ENCODE measurements at regions of chr22 and their contacts with region 1.

Region 1: DNA sequence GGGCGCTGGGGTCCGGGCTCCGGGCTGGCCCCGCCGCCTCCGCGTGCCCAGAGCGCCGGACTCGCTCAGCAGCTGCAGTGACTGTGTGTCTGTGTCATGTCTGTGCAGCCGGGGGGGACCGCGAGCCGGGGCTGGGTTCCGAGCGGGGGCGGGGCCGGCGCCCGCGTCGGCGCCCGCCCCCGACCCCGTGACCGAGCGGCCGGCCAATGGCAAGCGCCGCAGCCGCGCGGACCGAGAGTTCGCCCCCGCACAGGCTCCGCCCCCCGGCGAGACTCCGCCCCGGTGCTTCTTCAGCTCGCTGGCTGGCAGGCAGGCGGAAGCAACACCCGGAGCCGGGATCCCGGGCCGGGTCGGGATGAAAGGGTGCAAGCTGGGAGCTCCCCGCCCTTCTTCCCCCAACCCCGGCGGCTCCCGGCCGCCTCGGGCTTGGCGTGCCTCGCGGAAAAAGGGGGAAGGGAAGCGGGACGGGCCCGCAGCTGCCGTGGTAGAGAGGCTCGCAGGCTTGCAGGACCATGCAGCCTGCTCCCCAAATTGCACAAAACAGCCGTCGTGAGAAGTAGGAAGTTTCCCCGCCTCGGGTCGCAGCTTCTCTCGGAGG is 750 bp upstream of the LARGE1 start:
- DNase-seq: peak; percentile 79 to 99
- H3K4me3 ChIP-seq: peak overlapping the region; percentile 77 to 94
- H3K27ac ChIP-seq: peak overlapping the region; percentile 81 to 85
- H3K4me1 ChIP-seq: peaks cover 5 to 13% of the 10 kb centered on the region in 2 donors
- H3K27me3 ChIP-seq: no peaks in the 10 kb centered on the region
- CTCF ChIP-seq: no peak

Region 2: GRCh38 chr22:32474635-32475467 is 1446.2 kb before region 1 on chr22 and contains the start of gene FBXO7:
- intact Hi-C with region 1: loop called (anchors 10 kb)
- DNase-seq: peak; percentile 61 to 95
- H3K4me3 ChIP-seq: peak within 1 kb of the TSS; percentile 76 to 85
- H3K27ac ChIP-seq: peak within 1 kb of the TSS; percentile 98 to 99
- H3K4me1 ChIP-seq: peaks cover 4 to 18% of the 10 kb centered on the region in 2 donors
- H3K27me3 ChIP-seq: no peaks in the 10 kb centered on the region
- CTCF ChIP-seq: peak; percentile 26 to 52 (median 37)
- total RNA-seq, gene FBXO7: 47.0 TPM

Region 3: DNA sequence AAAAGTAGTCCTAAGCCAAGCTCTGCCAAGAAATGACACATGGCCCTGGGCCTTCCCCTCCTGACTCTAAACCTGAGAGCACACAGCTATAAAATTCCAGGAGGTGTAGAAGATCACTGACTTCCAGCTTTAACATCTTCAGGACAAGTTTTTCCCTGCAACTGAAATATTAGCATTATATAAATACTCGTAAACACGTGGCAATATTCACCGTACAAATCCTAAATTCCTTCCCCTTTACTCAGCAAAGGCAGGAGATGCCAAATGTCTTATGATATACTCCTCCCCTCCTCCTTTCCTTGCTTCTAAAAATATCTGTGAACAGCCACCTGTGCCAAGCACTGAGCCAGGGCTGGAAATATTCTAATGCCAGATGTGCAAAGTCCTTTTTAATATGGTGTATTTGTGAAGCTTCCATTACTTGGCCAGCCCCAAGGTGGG is 194.7 kb before region 1 on chr22:
- intact Hi-C with region 1: loop called (anchors 2 kb)
- DNase-seq: no peak
- H3K4me3 ChIP-seq: no peak overlapping the region
- H3K27ac ChIP-seq: peak overlapping the region; percentile 14 to 34
- H3K4me1 ChIP-seq: peaks cover 0 to 15% of the 10 kb centered on the region in 2 donors
- H3K27me3 ChIP-seq: no peaks in the 10 kb centered on the region
- CTCF ChIP-seq: no peak

Region 4: DNA sequence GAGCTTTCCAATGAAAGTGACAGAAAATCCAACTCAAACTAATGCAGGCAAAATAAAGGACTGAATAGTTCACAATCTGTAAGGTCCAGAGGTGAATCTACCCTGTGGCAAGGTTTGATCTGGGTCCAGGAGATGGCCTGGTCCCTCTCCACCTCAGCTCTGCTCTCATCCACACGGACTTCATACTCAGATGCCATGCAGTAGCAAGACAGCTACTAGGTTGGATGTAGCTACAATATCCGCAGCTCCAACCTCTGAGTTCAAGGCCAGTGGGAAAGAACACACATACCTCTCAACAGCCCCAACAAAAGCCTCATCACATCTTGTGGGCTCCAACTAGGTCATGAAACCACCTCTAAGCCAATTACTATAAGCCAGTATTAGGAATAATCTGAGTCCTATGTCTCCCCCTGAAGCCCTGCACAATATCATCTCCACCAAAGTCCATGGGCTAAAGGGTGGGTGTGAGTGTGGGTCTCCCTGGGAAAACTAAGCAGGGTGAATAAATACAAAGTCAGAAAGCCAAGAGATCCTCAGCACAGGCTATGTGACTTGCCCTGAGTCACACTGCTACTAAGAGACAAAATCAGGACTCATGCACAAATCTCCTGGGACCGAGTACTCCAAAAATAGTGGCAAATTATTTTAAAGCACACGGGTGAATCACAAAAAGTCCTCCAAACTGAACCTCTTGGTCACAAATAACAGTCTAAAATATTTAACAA is 79.6 kb before region 1 on chr22:
- intact Hi-C with region 1: loop called (anchors 1 kb)
- DNase-seq: no peak
- H3K4me3 ChIP-seq: peak overlapping the region in 1 of 2 donors; percentile 28
- H3K27ac ChIP-seq: peak overlapping the region; percentile 49 to 66
- H3K4me1 ChIP-seq: peaks cover 3 to 18% of the 10 kb centered on the region in 2 donors
- H3K27me3 ChIP-seq: no peaks in the 10 kb centered on the region
- CTCF ChIP-seq: no peak

Region 5: GRCh38 chr22:33909075-33909458 is 12.0 kb before region 1 on chr22:
- intact Hi-C with region 1: loop called (anchors 1 kb)
- DNase-seq: peak in 1 of 2 donors; percentile 77
- H3K4me3 ChIP-seq: peak overlapping the region in 1 of 2 donors; percentile 16
- H3K27ac ChIP-seq: peak overlapping the region; percentile 74 to 79
- H3K4me1 ChIP-seq: peaks cover 4 to 21% of the 10 kb centered on the region in 2 donors
- H3K27me3 ChIP-seq: no peaks in the 10 kb centered on the region
- CTCF ChIP-seq: no peak

Region 6: GRCh38 chr22:33952776-33953175 is 31.8 kb after region 1 on chr22:
- intact Hi-C with region 1: no loop called
- DNase-seq: no peak
- H3K4me3 ChIP-seq: no peak overlapping the region
- H3K27ac ChIP-seq: no peak overlapping the region
- H3K4me1 ChIP-seq: no peaks in the 10 kb centered on the region
- H3K27me3 ChIP-seq: no peaks in the 10 kb centered on the region
- CTCF ChIP-seq: no peak

Region 7: DNA sequence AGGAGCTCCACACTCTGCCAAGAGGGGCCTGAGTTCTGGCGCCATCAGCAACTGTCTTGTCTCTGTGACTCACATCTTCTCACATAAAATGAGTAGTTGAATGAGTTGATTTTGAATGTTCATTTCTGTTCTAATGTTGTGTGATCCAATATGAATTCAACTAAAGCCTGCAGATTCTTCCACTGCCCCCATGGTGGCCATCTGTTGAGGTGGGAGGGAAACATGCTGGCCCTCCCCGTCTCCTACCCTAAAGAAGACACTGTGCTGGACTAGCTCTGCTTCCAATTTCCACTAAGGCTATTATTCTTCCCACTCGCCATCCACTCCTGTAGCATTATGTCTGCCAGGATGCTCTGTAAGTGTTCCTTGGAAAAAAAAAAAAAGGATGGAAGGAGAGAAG is 554.9 kb after region 1 on chr22:
- intact Hi-C with region 1: no loop called
- DNase-seq: no peak
- H3K4me3 ChIP-seq: no peak overlapping the region
- H3K27ac ChIP-seq: no peak overlapping the region
- H3K4me1 ChIP-seq: no peaks in the 10 kb centered on the region
- H3K27me3 ChIP-seq: no peaks in the 10 kb centered on the region
- CTCF ChIP-seq: no peak